MCF 10A (cell line): ENCODE measurements at regions of chr7 and their contacts with region 1.

Region 1: GRCh38 chr7:118502235-118502634 is 277.7 kb downstream of the ANKRD7 start:
- DNase-seq: no peak
- H3K4me3 Mint-ChIP-seq: no peak overlapping the region
- H3K27ac Mint-ChIP-seq: no peak overlapping the region
- H3K4me1 Mint-ChIP-seq: no peaks in the 10 kb centered on the region
- H3K27me3 Mint-ChIP-seq: peaks cover 82% of the 10 kb centered on the region
- CTCF ChIP-seq: no peak

Region 2: DNA sequence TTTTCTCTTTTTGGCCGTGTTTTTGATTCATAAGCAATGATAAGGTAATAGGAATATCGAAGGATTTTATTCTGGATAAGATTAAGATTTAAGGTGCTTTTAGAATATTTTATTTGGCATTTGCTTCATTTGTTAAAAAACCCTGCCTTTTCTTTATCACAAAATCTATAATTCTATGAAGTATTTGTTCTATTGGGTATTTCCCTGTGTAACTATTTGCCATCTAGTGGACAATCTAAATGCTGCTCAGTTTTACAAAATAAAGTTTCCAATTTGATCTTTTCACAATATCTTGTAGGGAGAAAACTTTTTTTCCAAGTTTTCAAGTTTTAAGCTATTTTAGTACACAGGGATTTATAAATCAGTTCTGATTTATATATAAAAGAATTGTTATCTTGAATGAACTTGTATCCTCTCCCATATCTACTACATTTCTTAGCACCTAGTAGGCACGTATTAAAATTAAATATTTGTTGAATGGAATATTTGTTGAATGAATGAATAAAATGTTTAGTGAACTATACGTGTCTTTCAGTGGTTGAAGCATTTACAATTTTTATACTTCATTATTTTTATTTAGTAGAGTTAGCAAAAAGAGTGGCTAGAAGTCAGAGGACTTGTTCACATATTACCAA is 251.3 kb before region 1 on chr7:
- CTCF ChIA-PET with region 1: no interaction called
- POLR2A ChIA-PET with region 1: no interaction called
- intact Hi-C with region 1: loop called (anchors 10 kb)
- DNase-seq: no peak
- H3K4me3 Mint-ChIP-seq: no peak overlapping the region
- H3K27ac Mint-ChIP-seq: no peak overlapping the region
- H3K4me1 Mint-ChIP-seq: no peaks in the 10 kb centered on the region
- H3K27me3 Mint-ChIP-seq: peaks cover 81% of the 10 kb centered on the region
- CTCF ChIP-seq: no peak